CD14-positive monocyte (primary cell): ENCODE measurements at regions of chr20 and their contacts with region 1.

Region 1: DNA sequence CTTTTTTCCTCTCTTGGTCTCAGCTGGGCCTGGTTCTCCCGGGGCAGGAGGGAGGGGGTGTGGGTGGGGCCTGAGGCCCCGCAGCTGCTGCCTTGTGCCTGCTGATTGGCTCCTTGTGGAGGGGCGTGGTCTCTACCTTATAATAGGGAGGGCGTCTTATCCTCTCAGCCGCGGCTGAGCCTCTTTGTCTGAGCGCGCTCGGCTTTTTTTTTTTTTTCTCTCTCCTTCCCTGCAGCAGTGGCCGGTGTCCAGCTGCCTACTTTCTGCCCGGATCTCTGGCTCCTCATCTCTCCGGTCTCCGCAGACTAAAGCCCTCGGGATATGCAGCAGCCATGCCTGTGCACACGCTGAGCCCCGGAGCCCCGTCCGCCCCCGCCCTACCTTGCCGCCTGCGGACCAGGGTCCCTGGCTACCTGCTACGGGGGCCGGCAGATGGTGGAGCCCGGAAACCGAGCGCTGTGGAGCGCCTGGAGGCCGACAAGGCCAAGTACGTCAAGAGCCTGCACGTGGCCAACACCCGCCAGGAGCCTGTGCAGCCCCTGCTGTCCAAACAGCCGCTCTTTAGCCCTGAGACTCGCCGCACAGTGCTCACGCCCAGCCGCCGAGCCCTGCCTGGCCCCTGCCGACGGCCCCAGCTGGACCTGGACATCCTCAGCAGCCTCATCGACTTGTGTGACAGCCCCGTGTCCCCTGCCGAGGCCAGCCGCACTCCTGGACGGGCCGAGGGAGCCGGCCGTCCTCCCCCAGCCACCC is 11.1 kb downstream of the FAM110A start:
- DNase-seq: peak; percentile 68 to 72 (median 72)
- H3K4me3 ChIP-seq: peak overlapping the region; percentile 10 to 66 (median 45)
- H3K4me3 Mint-ChIP-seq: peak overlapping the region; percentile 77 to 80
- H3K27ac ChIP-seq: no peak overlapping the region
- H3K27ac Mint-ChIP-seq: peak overlapping the region in 5 of 7 donors; percentile 31 to 74 (median 46)
- H3K4me1 ChIP-seq: peaks cover 69 to 75% of the 10 kb centered on the region in 2 donors
- H3K4me1 Mint-ChIP-seq: peaks cover 67% of the 10 kb centered on the region
- H3K27me3 ChIP-seq: peaks cover 5 to 17% of the 10 kb centered on the region in 2 donors
- H3K27me3 Mint-ChIP-seq: peaks cover 15 to 27% (median 20%) of the 10 kb centered on the region in 3 donors
- CTCF ChIP-seq: no peak

Region 2: DNA sequence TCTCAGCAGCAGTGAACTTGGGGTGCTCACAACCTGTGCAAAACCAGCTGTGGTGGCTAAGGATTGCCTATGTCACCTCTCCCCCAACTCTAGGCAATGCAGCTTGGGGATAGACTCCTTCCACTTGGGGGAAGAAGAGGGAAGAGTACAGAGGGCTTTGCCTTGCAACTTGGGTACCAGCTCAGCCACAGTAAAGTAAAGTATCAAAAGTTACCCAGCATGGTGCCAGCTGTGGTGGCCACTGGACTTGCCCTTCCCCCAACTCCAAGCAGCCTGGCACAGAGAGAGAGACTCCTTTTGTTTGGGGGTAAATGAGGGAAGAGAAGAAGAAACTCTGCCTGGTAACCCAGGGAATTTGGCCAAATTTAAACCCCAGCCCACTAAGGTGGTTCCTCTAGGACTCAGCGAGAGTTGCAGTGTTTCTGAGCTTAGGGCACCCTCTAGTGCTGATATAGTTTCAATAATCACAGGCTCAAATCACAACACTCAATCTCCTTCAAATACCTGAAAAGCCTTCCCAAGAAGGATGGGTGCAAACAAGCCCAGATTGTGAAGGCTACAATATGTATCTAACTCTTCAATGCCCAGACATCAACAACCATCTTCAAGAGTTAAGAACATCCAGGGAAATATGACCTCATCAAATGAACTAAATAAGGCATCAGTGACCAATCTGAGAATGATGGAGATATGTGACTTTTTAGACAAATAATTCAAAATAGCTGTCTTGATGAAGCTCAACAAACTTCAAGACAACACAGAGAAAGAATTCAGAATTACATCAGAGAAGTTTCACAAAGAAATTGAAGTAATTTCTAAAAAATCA is 625.1 kb before region 1 on chr20:
- intact Hi-C with region 1: no loop called
- DNase-seq: no peak
- H3K4me3 ChIP-seq: no peak overlapping the region
- H3K4me3 Mint-ChIP-seq: no peak overlapping the region
- H3K27ac ChIP-seq: no peak overlapping the region
- H3K27ac Mint-ChIP-seq: peak overlapping the region in 1 of 7 donors; percentile 54
- H3K4me1 ChIP-seq: no peaks in the 10 kb centered on the region
- H3K4me1 Mint-ChIP-seq: no peaks in the 10 kb centered on the region
- H3K27me3 ChIP-seq: peaks cover 0 to 6% of the 10 kb centered on the region in 2 donors
- H3K27me3 Mint-ChIP-seq: peaks cover 8 to 16% (median 15%) of the 10 kb centered on the region in 3 donors
- CTCF ChIP-seq: no peak

Region 3: GRCh38 chr20:561437-562231 is 283.0 kb before region 1 on chr20:
- intact Hi-C with region 1: no loop called
- DNase-seq: peak; percentile 27 to 55 (median 54)
- H3K4me3 ChIP-seq: no peak overlapping the region
- H3K4me3 Mint-ChIP-seq: no peak overlapping the region
- H3K27ac ChIP-seq: no peak overlapping the region
- H3K27ac Mint-ChIP-seq: no peak overlapping the region
- H3K4me1 ChIP-seq: no peaks in the 10 kb centered on the region
- H3K4me1 Mint-ChIP-seq: no peaks in the 10 kb centered on the region
- H3K27me3 ChIP-seq: no peaks in the 10 kb centered on the region
- H3K27me3 Mint-ChIP-seq: peaks cover 6 to 17% (median 9%) of the 10 kb centered on the region in 3 donors
- CTCF ChIP-seq: peak; percentile 96

Region 4: DNA sequence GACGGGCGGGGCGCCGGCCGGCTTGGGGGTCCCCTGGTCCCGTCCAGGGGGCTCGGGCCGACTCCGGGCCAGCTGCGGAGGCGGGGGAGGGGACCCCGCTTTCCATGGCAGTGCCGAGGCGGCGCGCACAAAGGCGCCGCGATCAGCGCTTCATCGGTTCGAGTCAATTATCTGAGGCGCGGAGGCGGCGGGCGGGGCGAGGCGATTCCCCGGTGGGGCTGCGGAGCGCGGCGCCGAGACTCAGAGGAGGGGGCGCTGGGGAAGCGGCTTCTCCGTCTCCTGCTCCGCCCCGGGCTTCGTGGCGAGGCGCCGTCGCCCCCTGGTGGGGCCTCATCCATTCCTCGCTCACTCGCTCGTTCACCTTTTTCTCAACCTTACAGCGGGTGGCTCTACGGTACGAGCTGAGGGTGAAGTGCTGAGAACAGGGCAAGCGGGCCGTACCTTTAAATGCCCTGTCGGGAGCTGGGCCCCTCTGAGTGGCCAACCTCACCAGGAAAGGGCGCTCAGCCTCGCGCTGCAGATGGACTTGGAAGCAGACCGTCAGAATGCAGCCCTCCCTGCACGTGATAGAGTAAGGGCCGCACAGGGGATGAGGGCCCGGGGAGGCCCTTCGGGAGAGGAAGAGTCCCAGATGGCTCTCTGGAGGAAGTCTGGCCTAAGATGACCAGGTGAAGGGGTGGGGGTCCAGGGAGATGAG is 116.3 kb before region 1 on chr20:
- intact Hi-C with region 1: no loop called
- DNase-seq: peak in 2 of 3 donors; percentile 7 to 38
- H3K4me3 ChIP-seq: no peak overlapping the region
- H3K4me3 Mint-ChIP-seq: peak overlapping the region; percentile 34 to 70
- H3K27ac ChIP-seq: no peak overlapping the region
- H3K27ac Mint-ChIP-seq: no peak overlapping the region
- H3K4me1 ChIP-seq: peaks cover 2 to 10% of the 10 kb centered on the region in 2 donors
- H3K4me1 Mint-ChIP-seq: peaks cover 6% of the 10 kb centered on the region
- H3K27me3 ChIP-seq: peaks cover 22 to 46% of the 10 kb centered on the region in 2 donors
- H3K27me3 Mint-ChIP-seq: peaks cover 52 to 67% (median 55%) of the 10 kb centered on the region in 3 donors
- CTCF ChIP-seq: peak; percentile 61

Region 5: DNA sequence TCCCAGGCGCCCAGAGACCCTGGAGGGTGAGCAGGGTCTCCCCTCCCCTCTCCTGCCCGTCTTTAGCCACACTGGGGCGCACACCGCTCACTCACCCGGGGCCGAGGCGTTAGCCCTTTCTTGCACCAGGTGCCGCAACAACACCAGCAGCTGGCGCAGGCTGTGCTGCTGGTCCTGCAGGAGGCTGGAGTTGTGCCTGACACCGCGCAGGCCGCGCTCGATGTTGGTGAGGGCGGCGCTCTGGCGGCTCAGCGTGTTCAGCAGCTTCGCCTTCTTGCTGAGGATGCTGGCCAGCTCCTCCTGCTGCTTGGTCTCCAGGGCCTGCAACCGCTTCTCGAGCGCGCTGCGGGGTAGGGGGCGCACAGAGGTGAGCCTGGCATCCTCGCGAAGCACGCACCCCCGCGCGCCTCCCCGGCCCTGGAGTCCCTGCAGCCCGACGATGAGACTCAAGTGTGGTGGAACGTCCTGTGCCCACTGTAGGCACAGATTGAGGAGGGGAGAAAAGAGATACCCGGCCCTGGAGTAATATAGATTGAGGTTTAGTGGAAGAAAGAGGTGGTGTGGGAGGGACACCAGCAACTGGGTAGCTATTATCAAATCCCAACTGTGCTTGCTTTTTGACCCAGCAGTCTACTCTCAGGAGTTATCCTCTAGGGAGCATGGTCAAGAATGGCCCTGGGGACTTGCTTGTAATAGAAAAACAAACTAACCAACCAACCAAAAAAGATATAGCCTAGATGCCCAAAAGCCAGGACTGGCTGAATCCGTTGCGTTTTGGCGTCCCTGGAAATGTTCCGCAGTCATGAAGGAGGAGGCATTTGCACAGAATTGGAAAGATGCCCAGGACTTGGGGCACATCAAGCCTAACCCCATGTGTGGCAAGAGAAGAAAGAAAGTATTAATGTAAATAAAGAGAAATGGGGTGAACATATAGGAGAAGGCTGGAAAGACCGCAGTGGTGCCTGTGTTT is 40.6 kb after region 1 on chr20:
- intact Hi-C with region 1: loop called (anchors 5 kb)
- DNase-seq: peak; percentile 30 to 37 (median 36)
- H3K4me3 ChIP-seq: no peak overlapping the region
- H3K4me3 Mint-ChIP-seq: peak overlapping the region in 1 of 2 donors; percentile 67
- H3K27ac ChIP-seq: no peak overlapping the region
- H3K27ac Mint-ChIP-seq: no peak overlapping the region
- H3K4me1 ChIP-seq: peaks cover 44 to 59% of the 10 kb centered on the region in 2 donors
- H3K4me1 Mint-ChIP-seq: peaks cover 64% of the 10 kb centered on the region
- H3K27me3 ChIP-seq: peaks cover 0 to 32% of the 10 kb centered on the region in 2 donors
- H3K27me3 Mint-ChIP-seq: peaks cover 24 to 32% (median 28%) of the 10 kb centered on the region in 3 donors
- CTCF ChIP-seq: peak; percentile 25

Region 6: GRCh38 chr20:1325173-1326030 is 480.8 kb after region 1 on chr20:
- intact Hi-C with region 1: no loop called
- DNase-seq: peak; percentile 98 to 99 (median 99)
- H3K4me3 ChIP-seq: peak overlapping the region; percentile 66 to 85 (median 75)
- H3K4me3 Mint-ChIP-seq: no peak overlapping the region
- H3K27ac ChIP-seq: peak overlapping the region; percentile 92 to 99
- H3K27ac Mint-ChIP-seq: no peak overlapping the region
- H3K4me1 ChIP-seq: peaks cover 16 to 30% of the 10 kb centered on the region in 2 donors
- H3K4me1 Mint-ChIP-seq: peaks cover 35% of the 10 kb centered on the region
- H3K27me3 ChIP-seq: no peaks in the 10 kb centered on the region
- H3K27me3 Mint-ChIP-seq: peaks cover 0 to 3% (median 0%) of the 10 kb centered on the region in 3 donors
- CTCF ChIP-seq: no peak